ENCODE measurements at regions of chr9 and their contacts with region 1.

Region 1: DNA sequence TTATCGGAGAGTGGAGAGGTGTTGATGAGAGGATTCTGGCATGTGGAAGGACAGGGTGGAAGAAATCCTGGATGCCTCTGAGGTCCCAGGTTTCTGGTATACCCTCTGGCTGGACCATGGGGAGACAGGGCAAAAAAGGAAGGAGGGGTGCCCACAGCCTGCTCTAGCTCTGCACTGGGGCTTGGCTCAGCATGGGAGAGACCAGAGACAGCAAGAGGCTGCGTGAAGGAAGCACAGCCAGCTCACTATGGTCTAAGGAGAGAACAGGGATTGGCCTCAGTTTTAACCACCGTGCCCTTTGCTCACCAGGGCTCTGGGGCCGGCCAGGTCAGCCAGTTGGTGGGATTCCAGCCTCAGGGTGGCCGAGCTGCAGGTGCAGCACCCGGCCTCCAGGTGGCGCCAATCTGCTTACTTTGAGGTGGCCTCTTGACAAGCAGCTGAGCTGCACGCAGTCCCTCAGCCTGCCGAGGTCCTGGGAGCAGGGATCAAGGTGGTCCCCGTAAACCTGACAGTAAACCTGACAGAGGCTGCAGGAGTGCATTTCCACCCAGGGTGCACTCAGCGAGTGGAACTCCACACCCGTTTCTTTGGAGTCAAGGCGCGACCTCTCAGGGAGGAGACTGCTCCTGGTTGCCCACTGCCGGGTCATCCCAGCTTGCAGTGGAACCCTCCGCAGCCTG is 25.0 kb upstream of the SPTLC1 start:
- DNase-seq: peak; percentile 60
- H3K4me3 Mint-ChIP-seq: no peak overlapping the region
- H3K27ac Mint-ChIP-seq: no peak overlapping the region
- H3K4me1 Mint-ChIP-seq: peaks cover 7% of the 10 kb centered on the region
- H3K27me3 Mint-ChIP-seq: peaks cover 31% of the 10 kb centered on the region

Region 2: GRCh38 chr9:91758491-91758981 is 381.7 kb before region 1 on chr9:
- intact Hi-C with region 1: no loop called
- DNase-seq: peak; percentile 23
- H3K4me3 Mint-ChIP-seq: no peak overlapping the region
- H3K27ac Mint-ChIP-seq: no peak overlapping the region
- H3K4me1 Mint-ChIP-seq: no peaks in the 10 kb centered on the region
- H3K27me3 Mint-ChIP-seq: peaks cover 4% of the 10 kb centered on the region

Region 3: DNA sequence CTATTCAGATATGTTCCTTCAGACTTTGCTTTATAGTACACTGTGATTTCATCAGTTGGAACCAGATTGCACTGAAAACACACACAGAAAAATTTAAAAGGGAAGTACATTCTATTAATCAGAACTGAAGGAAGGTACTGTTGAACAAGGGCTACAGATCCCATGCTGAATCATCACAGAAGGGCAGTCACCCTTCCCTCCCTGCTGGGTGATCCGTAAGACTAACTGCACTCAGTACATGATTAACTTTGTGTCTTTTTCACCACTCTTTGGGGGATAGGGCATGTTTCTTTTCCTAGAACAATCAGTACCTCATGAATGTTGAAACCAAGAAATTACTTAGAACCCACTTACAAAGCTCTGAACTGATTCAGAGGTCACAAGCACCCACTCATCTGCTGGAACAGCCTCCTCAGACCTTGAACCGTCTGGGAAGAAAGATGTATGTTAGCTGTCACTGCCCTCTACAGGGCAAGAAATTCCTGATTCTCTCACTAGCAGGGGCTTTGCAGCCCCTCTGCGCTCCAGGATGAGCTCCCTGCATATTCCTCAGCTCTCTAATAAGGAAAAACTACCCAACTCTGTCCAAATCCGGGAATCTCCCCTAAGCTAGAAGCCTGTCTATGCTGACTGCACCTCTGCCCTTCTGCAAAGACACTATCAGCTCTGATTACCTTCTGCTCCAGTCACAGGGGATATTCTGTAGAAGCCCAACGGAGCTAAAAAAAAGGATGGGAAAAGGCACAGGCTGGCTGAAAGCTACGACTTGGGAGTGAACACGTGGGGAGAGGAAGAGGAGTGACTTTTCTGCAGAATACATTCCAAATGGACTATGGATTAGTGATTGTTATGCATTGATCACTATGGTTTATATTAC is 102.3 kb after region 1 on chr9:
- intact Hi-C with region 1: loop called (anchors 10 kb)
- DNase-seq: no peak
- H3K4me3 Mint-ChIP-seq: no peak overlapping the region
- H3K27ac Mint-ChIP-seq: no peak overlapping the region
- H3K4me1 Mint-ChIP-seq: no peaks in the 10 kb centered on the region
- H3K27me3 Mint-ChIP-seq: no peaks in the 10 kb centered on the region

Measured in activated T-helper 2 cell treated with anti-CD3 and anti-CD28 coated beads, Interferon-gamma antibody, Interleukin-2, Interleukin-4, amounts not matched to agents 10 μg/mL and 5 μg/mL and 100 μg/mL, durations not matched to agents 14 hours and 24 hours and 36 hours (primary cell).